ENCODE measurements at regions of chr17 and their contacts with region 1.

Region 1: DNA sequence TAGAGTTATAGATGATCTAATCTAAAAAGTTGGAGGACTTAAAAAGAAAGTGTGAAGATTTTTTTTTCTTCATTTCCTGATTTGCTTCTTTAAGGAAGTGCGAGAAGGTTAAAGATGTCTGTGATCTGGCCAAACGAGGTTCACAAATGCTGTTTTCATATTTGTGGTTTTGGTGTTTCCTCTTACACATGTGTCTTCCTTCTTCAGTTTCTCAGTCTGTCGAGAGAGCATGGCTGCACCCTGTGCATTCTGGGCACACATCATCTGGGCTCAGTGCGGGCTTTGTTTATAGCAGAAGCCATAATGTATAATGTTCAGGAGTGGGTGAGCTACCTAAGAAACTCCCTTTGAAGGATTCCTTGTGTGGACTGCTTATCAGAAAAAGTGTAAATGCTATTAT is 260.4 kb upstream of the TBX2 start:
- DNase-seq: peak; percentile 68
- H3K4me3 Mint-ChIP-seq: peak overlapping the region; percentile 27
- H3K27ac Mint-ChIP-seq: no peak overlapping the region
- H3K4me1 Mint-ChIP-seq: peaks cover 15% of the 10 kb centered on the region
- H3K27me3 Mint-ChIP-seq: no peaks in the 10 kb centered on the region

Region 2: GRCh38 chr17:61157246-61157886 is 18.1 kb after region 1 on chr17:
- CTCF ChIA-PET with region 1: no interaction called
- POLR2A ChIA-PET with region 1: no interaction called
- intact Hi-C with region 1: loop called (anchors 2 kb)
- DNase-seq: no peak
- H3K4me3 Mint-ChIP-seq: no peak overlapping the region
- H3K27ac Mint-ChIP-seq: no peak overlapping the region
- H3K4me1 Mint-ChIP-seq: peaks cover 23% of the 10 kb centered on the region
- H3K27me3 Mint-ChIP-seq: no peaks in the 10 kb centered on the region

Region 3: GRCh38 chr17:61179380-61179806 is 40.2 kb after region 1 on chr17:
- CTCF ChIA-PET with region 1: no interaction called
- POLR2A ChIA-PET with region 1: no interaction called
- intact Hi-C with region 1: no loop called
- DNase-seq: no peak
- H3K4me3 Mint-ChIP-seq: no peak overlapping the region
- H3K27ac Mint-ChIP-seq: no peak overlapping the region
- H3K4me1 Mint-ChIP-seq: no peaks in the 10 kb centered on the region
- H3K27me3 Mint-ChIP-seq: no peaks in the 10 kb centered on the region

Region 4: GRCh38 chr17:61211236-61211635 is 72.0 kb after region 1 on chr17:
- CTCF ChIA-PET with region 1: no interaction called
- POLR2A ChIA-PET with region 1: no interaction called
- intact Hi-C with region 1: no loop called
- DNase-seq: no peak
- H3K4me3 Mint-ChIP-seq: no peak overlapping the region
- H3K27ac Mint-ChIP-seq: no peak overlapping the region
- H3K4me1 Mint-ChIP-seq: no peaks in the 10 kb centered on the region
- H3K27me3 Mint-ChIP-seq: no peaks in the 10 kb centered on the region

Measured in activated CD4-positive, alpha-beta memory T cell treated with anti-CD3 and anti-CD28 coated beads for 36 hours (primary cell).